MCF 10A (cell line): ENCODE measurements at regions of chr6 and their contacts with region 1.

Region 1: GRCh38 chr6:32933636-32934085 is 7.2 kb downstream of the HLA-DMB start:
- DNase-seq: peak; percentile 82
- H3K4me3 Mint-ChIP-seq: no peak overlapping the region
- H3K27ac Mint-ChIP-seq: no peak overlapping the region
- H3K4me1 Mint-ChIP-seq: no peaks in the 10 kb centered on the region
- H3K27me3 Mint-ChIP-seq: peaks cover 85% of the 10 kb centered on the region
- CTCF ChIP-seq: peak; percentile 66

Region 2: GRCh38 chr6:31897612-31898382 is 1035.9 kb before region 1 on chr6 and contains the start of gene EHMT2:
- CTCF ChIA-PET with region 1: no interaction called
- POLR2A ChIA-PET with region 1: no interaction called
- intact Hi-C with region 1: no loop called
- DNase-seq: peak; percentile 83
- H3K4me3 Mint-ChIP-seq: peak within 1 kb of the TSS; percentile 93
- H3K27ac Mint-ChIP-seq: peak within 1 kb of the TSS; percentile 93
- H3K4me1 Mint-ChIP-seq: peaks cover 26% of the 10 kb centered on the region
- H3K27me3 Mint-ChIP-seq: no peaks in the 10 kb centered on the region
- CTCF ChIP-seq: no peak
- total RNA-seq, gene EHMT2: 20.2 and 21.8 TPM in 2 replicates

Region 3: GRCh38 chr6:32838114-32838958 is 95.3 kb before region 1 on chr6 and contains the start of gene TAP2:
- CTCF ChIA-PET with region 1: interaction called, 13 read pairs
- POLR2A ChIA-PET with region 1: interaction called, 3 read pairs
- intact Hi-C with region 1: no loop called
- DNase-seq: peak; percentile 91
- H3K4me3 Mint-ChIP-seq: peak within 1 kb of the TSS; percentile 77
- H3K27ac Mint-ChIP-seq: peak within 1 kb of the TSS; percentile 29
- H3K4me1 Mint-ChIP-seq: peaks cover 34% of the 10 kb centered on the region
- H3K27me3 Mint-ChIP-seq: no peaks in the 10 kb centered on the region
- CTCF ChIP-seq: peak; percentile 96
- total RNA-seq, gene TAP2: 43.3 and 61.2 TPM in 2 replicates

Region 4: DNA sequence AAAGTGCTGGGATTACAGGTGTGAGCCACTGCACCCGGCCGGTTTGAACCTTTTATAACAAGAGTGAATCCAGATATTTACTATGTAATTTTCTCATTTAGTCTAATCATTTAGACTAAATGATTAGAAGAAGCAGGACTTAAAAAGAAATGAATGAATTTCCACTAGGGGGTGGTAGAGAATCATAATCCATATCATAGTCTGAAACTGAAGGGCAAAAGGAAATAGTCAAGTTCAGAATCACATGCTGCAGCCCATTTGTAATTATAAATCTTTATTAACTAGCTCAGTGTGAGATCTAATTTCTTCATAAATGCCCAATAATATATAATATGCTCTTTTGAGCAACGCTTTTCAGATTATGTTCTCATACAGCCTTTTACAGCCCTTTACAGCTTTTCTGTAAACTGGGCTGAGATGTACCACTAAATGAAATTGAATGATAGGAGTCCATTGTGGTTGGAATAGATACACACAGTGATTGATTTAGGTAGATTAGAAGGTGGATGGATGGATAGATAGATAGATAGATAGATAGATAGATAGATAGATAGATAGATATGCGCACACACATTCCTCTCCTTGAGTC is 47.9 kb before region 1 on chr6:
- CTCF ChIA-PET with region 1: interaction called, 9 read pairs
- POLR2A ChIA-PET with region 1: no interaction called
- intact Hi-C with region 1: loop called (anchors 5 kb)
- DNase-seq: peak; percentile 74
- H3K4me3 Mint-ChIP-seq: no peak overlapping the region
- H3K27ac Mint-ChIP-seq: no peak overlapping the region
- H3K4me1 Mint-ChIP-seq: peaks cover 11% of the 10 kb centered on the region
- H3K27me3 Mint-ChIP-seq: no peaks in the 10 kb centered on the region
- CTCF ChIP-seq: peak; percentile 56

Region 5: GRCh38 chr6:32912951-32913350 is 20.7 kb before region 1 on chr6:
- CTCF ChIA-PET with region 1: interaction called, 24 read pairs
- POLR2A ChIA-PET with region 1: interaction called, 3 read pairs
- intact Hi-C with region 1: no loop called
- DNase-seq: no peak
- H3K4me3 Mint-ChIP-seq: no peak overlapping the region
- H3K27ac Mint-ChIP-seq: no peak overlapping the region
- H3K4me1 Mint-ChIP-seq: no peaks in the 10 kb centered on the region
- H3K27me3 Mint-ChIP-seq: peaks cover 55% of the 10 kb centered on the region
- CTCF ChIP-seq: no peak

Region 6: DNA sequence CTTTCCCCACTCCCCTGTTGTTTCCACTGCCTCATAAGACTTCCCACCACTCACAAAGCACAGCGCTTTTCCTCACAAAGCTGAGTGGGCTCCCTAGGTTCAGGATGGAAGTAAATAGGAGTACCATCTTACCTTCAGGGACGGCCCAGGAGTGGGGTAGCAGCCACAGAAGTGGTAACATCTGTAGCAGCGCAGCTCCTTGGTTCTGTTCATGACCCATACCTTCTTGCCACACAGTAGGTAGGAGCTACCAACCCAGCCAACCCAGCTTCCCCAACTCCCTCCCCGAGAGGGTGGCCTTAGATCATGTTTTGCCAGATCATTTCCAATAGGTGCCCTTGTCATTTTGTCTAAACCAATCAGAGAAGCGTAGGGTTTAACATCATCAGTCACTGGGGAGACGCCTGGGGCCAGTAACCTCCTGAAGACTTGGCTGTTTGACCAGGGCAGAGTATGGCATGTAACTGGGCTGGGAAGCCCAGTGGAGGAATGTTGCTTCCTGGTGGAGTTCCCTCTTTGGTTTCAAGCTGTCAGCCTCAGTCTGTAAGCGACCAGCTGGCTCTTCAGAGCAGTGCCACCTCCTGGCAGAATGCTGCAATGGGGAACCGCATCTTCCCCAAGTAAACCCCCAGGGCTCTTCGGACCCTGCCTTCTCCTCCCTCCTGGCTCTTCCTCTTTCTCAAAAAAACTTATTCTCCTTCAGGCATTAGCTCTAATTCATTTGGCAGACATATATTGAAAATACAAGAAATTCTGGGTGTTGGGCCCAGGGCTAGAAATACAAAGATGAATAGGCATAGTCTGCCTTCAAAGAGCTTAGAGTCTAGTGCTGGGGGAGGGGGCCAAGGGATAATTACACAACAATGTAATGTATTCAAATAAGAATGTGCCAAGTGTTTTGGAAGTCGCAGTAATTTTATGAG is 19.4 kb after region 1 on chr6 and contains the start of gene HLA-DMA:
- CTCF ChIA-PET with region 1: interaction called, 49 read pairs
- POLR2A ChIA-PET with region 1: interaction called, 6 read pairs
- intact Hi-C with region 1: no loop called
- DNase-seq: peak; percentile 89
- H3K4me3 Mint-ChIP-seq: no peak within 1 kb of the TSS
- H3K27ac Mint-ChIP-seq: no peak within 1 kb of the TSS
- H3K4me1 Mint-ChIP-seq: no peaks in the 10 kb centered on the region
- H3K27me3 Mint-ChIP-seq: no peaks in the 10 kb centered on the region
- CTCF ChIP-seq: peak; percentile 45
- total RNA-seq, gene HLA-DMA: 2.4 and 2.9 TPM in 2 replicates

Region 7: DNA sequence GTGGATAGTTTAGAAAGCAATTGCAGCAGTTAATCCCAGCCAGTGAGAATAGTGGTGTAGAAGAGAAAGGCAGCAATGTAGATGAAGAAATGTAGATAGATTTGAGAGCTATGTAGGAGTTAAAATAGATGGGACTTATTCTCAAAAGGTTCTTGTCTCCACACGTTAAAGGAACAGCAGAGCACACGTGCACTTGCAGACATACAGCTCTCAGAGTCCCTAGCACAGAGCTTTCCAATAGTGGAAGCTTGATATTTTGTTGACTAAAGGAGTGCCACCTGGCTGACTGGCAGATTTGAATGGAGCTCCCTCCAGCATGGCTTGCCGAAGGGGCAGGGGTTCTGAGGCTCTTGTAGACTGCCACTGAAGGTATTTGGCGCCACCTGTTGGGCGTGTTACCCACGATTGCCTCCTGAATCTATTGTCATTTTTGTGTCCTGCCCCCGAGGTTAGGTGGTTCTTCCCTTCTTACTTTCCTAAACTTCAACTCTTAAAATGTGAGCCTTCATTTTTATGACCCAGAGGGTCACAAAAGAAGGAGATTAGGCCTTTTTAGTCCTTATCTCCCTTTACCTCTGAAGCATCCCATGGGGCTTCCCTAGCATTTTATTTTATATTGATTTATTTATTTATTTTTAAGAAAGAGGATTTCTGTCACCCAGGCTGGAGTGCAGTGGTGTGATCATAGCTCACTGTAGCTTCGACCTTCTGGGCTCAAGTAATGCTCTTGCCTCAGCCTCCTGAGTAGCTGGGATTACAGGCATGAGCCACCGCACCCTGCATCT is 51.1 kb after region 1 on chr6:
- CTCF ChIA-PET with region 1: interaction called, 161 read pairs
- POLR2A ChIA-PET with region 1: interaction called, 14 read pairs
- intact Hi-C with region 1: loop called (anchors 1 kb)
- DNase-seq: peak; percentile 91
- H3K4me3 Mint-ChIP-seq: no peak overlapping the region
- H3K27ac Mint-ChIP-seq: no peak overlapping the region
- H3K4me1 Mint-ChIP-seq: peaks cover 20% of the 10 kb centered on the region
- H3K27me3 Mint-ChIP-seq: no peaks in the 10 kb centered on the region
- CTCF ChIP-seq: peak; percentile 81